Calu3 (cell line): ENCODE measurements at regions of chr15 and their contacts with region 1.

Region 1: DNA sequence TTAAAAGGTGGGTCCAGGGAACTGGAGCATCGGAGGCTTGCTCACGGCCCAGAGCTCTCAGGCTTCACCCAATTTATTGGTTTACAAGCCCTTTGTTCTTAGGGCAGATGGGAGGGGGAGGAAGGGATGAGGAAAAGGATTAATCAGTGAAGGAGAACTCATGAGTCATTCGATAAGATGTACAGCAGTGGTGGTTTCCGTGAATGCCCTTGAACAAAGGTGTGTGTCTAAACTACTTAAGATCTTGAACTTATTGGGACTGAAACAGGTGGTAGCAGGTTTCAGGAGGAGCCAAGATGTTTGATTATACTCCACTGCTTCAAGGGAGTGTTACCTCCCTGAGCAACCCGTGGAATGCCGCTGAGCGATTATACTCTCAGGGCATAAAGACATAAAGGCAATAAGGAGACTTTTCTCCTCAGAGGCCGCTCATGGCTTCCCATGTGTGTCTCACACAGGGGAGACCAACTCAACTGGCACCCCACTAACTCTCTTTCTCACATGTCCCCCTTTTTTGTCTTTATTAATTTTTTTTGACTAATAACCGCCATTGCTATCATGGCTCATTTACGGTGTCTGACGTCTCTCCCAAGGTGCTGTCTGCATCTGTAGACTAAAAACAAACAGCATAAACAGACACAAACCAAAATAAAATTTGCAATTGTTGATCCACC is 17.3 kb upstream of the SLC28A2 start:
- DNase-seq: peak; percentile 7
- H3K4me3 Mint-ChIP-seq: no peak overlapping the region
- H3K27ac Mint-ChIP-seq: no peak overlapping the region
- H3K4me1 Mint-ChIP-seq: no peaks in the 10 kb centered on the region
- H3K27me3 Mint-ChIP-seq: no peaks in the 10 kb centered on the region
- CTCF ChIP-seq: no peak

Region 2: DNA sequence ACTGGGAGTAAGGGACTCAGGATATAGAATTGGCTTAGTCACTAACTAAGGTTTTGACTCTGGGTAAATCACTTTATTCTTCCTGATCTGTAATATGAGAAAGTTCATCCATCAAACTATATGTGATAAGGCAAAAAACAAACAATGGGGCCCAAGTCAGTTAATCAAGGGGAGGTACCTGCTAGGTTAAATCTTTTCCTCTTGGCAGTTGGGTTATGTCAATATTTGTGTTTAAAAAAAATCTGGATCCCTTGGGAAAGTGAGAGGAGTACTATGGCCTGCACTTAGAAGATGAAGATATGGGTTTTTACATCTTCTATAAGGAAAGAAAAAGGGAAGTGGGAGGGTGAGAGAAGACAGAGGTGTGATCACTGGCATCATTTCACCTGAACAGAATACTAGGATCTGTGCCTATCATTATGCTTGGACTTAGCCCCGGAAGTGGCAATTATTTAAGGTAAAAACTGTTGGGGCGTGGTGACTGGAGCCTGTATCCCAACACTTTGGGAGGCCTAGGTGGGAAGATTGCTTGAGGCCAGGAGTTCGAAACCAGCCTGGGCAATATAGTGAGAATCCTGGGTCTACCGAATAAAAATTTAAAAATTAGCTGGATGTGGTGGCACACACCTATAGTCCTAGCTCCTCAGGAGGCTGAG is 14.6 kb after region 1 on chr15:
- CTCF ChIA-PET with region 1: no interaction called
- intact Hi-C with region 1: loop called (anchors 2 kb)
- DNase-seq: peak; percentile 23
- H3K4me3 Mint-ChIP-seq: no peak overlapping the region
- H3K27ac Mint-ChIP-seq: peak overlapping the region; percentile 13
- H3K4me1 Mint-ChIP-seq: peaks cover 10% of the 10 kb centered on the region
- H3K27me3 Mint-ChIP-seq: no peaks in the 10 kb centered on the region
- CTCF ChIP-seq: no peak